Sigmoid colon (tissue), 7 donors: ENCODE measurements at regions of chr1 and their contacts with region 1.

Region 1: DNA sequence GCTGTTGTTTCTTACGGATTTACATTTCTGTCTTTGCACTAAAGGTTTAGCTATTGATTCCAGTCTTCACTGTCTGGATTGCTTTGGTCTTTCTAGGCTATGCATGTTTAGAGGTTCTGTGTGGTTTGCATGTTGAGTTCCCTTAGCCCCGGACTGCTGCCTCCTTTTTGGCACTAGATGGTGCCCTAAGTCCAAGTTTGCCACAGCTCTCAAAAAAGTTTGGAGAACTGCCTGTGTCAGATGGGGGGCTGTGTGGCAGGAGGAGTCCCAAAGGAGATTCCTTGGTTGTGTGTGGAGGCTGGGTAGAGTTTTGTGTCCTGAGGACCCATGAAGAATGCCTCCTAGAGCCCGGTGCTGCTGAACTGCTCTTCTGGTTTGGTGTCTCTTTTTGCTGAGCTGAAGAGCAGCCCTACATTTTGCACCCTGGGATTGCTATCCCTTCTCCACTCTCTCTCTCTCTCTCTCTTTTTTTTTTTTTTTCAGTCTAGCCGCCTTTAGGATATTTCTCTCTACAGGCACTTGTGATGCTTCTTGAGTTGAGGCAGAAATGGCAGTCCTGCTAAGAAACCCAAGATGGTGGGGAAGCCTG is 74.4 kb downstream of the PTGS2 start:
- DNase-seq: peak; percentile 69
- H3K4me3 ChIP-seq: no peak overlapping the region
- H3K27ac ChIP-seq: no peak overlapping the region
- H3K4me1 ChIP-seq: peaks cover 0 to 18% (median 10%) of the 10 kb centered on the region in 4 donors
- H3K27me3 ChIP-seq: no peaks in the 10 kb centered on the region
- CTCF ChIP-seq: peak; percentile 42 to 72 (median 54)
- EP300 ChIP-seq: no peak
- POLR2A ChIP-seq: no peak

Region 2: GRCh38 chr1:186482661-186483255 is 123.1 kb before region 1 on chr1:
- intact Hi-C with region 1: loop called (anchors 2 kb)
- DNase-seq: peak; percentile 67
- H3K4me3 ChIP-seq: no peak overlapping the region
- H3K27ac ChIP-seq: no peak overlapping the region
- H3K4me1 ChIP-seq: no peaks in the 10 kb centered on the region
- H3K27me3 ChIP-seq: no peaks in the 10 kb centered on the region
- CTCF ChIP-seq: peak; percentile 14 to 81 (median 56)
- EP300 ChIP-seq: no peak
- POLR2A ChIP-seq: no peak

Region 3: GRCh38 chr1:186502087-186502486 is 103.8 kb before region 1 on chr1:
- intact Hi-C with region 1: no loop called
- DNase-seq: no peak
- H3K4me3 ChIP-seq: no peak overlapping the region
- H3K27ac ChIP-seq: no peak overlapping the region
- H3K4me1 ChIP-seq: no peaks in the 10 kb centered on the region
- H3K27me3 ChIP-seq: no peaks in the 10 kb centered on the region
- CTCF ChIP-seq: no peak
- EP300 ChIP-seq: no peak
- POLR2A ChIP-seq: no peak

Region 4: DNA sequence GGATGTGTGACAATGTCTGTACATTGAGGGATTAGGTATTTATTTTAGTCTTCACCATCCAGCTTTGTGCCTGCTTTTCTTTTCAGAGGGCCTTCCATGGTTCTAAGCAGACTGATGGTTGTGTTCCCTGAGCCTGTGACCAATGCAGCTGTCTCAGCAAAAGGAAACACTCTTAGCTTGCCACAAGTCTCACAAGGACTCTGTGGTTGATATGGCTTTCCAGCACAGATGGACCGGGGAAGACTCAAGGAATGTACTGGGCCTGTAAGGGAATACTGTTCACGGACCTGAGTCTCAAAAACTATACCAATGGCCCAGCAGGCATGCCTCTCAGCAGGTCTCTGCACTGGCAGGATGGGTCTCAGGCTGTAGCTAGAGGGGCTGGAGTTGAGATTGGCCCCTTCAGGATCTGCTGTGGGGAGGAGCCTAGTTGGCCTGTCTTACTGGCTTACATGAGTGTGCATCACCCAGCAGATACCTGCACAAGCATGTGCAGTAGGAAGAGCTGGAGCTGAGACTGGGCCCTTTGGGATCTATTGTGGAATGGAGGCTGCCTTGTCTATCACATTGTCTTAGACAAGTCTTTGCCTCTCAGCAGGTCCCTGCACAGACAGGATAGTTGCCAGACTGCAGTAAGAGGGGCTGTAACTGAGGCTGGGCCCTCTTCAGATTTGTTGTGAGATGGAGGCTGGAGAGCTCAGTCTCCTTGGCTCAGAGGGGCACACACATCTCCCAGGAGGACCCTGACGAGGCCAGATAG is 93.0 kb before region 1 on chr1:
- intact Hi-C with region 1: no loop called
- DNase-seq: no peak
- H3K4me3 ChIP-seq: no peak overlapping the region
- H3K27ac ChIP-seq: no peak overlapping the region
- H3K4me1 ChIP-seq: no peaks in the 10 kb centered on the region
- H3K27me3 ChIP-seq: no peaks in the 10 kb centered on the region
- CTCF ChIP-seq: no peak
- EP300 ChIP-seq: no peak
- POLR2A ChIP-seq: no peak

Region 5: GRCh38 chr1:186828611-186829454 is 223.0 kb after region 1 on chr1 and contains the start of gene PLA2G4A:
- intact Hi-C with region 1: loop called (anchors 10 kb)
- DNase-seq: peak; percentile 70
- H3K4me3 ChIP-seq: peak within 1 kb of the TSS; percentile 69 to 79 (median 76)
- H3K27ac ChIP-seq: peak within 1 kb of the TSS; percentile 72 to 87 (median 86)
- H3K4me1 ChIP-seq: peaks cover 0 to 28% (median 12%) of the 10 kb centered on the region in 4 donors
- H3K27me3 ChIP-seq: no peaks in the 10 kb centered on the region
- CTCF ChIP-seq: no peak
- EP300 ChIP-seq: no peak
- POLR2A ChIP-seq: no peak
- total RNA-seq, gene PLA2G4A: 17.2 to 51.0 (median 29.0) TPM

Region 6: DNA sequence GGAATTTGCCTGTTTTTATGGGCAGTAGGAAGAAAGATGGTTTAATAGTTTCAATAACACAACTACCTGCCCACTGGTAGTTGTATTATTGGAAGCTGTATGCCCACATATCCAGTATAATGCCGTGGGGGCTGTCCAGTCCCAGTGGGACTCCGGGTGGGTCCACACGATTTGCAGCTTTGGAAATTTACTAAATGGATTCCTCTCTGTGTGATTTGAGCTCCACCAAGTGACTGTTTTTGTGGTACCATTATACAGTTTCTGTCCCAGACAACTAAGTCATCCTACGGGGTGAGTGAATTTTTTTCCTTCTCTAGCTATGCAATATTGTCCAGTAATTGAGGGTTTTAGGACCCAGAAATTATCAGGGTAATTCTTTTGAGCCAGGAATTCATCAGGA is 309.7 kb after region 1 on chr1:
- intact Hi-C with region 1: loop called (anchors 5 kb)
- DNase-seq: no peak
- H3K4me3 ChIP-seq: no peak overlapping the region
- H3K27ac ChIP-seq: no peak overlapping the region
- H3K4me1 ChIP-seq: no peaks in the 10 kb centered on the region
- H3K27me3 ChIP-seq: no peaks in the 10 kb centered on the region
- CTCF ChIP-seq: no peak
- EP300 ChIP-seq: no peak
- POLR2A ChIP-seq: no peak